Activated CD4-positive, alpha-beta T cell treated with anti-CD3 and anti-CD28 coated beads, Interleukin-2, amount 10 ng/mL, durations not matched to agents 24 days and 14 days (primary cell): ENCODE measurements at regions of chr12 and their contacts with region 1.

Region 1: GRCh38 chr12:56468216-56469006 is at the start of gene SPRYD4:
- DNase-seq: peak; percentile 99
- H3K4me3 Mint-ChIP-seq: peak within 1 kb of the TSS; percentile 92
- H3K27ac Mint-ChIP-seq: peak within 1 kb of the TSS; percentile 98
- H3K4me1 Mint-ChIP-seq: peaks cover 24% of the 10 kb centered on the region
- H3K27me3 Mint-ChIP-seq: no peaks in the 10 kb centered on the region
- total RNA-seq, gene SPRYD4: 5.2 and 5.5 TPM in 2 replicates

Region 2: DNA sequence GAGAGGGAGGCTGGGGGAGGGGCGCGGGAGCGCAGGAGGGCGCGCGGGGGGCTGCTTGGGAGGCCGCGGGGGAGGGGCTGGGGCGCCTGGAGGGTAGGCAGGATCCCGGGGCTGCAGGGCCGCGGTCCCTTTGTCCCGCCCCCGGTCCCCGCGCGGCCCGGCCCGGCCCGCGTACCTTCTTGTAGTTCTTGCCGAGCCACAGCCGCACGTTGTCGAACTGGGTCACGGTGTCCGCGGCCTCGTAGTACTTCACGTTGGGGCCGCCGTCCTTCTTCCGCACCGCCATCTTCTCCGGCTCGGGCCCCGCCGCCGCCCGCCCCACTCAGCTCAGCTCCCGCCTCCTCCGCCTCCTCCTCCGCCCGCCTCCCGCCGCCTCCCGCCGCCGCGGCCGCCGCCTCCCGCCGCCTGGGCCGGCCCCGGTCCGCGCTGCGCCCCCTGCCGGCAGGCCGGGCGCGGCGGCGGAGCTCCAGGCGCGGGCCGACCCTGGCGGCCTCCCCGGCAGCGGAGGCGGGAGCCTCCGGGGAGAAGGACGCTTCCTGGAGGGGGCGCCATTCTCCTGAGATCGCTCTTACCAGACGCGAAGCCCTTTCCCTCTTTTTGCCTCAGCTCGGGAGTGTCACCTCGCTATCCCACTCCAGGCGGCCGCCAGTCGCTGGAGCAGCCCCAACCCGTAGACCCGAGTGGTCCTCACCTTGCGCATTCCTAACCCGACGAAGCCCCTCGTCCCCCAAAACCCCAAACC is 279.1 kb before region 1 on chr12 and contains the start of gene SMARCC2:
- intact Hi-C with region 1: loop called (anchors 1 kb)
- DNase-seq: peak; percentile 96
- H3K4me3 Mint-ChIP-seq: peak within 1 kb of the TSS; percentile 97
- H3K27ac Mint-ChIP-seq: peak within 1 kb of the TSS; percentile 95
- H3K4me1 Mint-ChIP-seq: peaks cover 42% of the 10 kb centered on the region
- H3K27me3 Mint-ChIP-seq: no peaks in the 10 kb centered on the region
- total RNA-seq, gene SMARCC2: 127 and 130 TPM in 2 replicates

Region 3: DNA sequence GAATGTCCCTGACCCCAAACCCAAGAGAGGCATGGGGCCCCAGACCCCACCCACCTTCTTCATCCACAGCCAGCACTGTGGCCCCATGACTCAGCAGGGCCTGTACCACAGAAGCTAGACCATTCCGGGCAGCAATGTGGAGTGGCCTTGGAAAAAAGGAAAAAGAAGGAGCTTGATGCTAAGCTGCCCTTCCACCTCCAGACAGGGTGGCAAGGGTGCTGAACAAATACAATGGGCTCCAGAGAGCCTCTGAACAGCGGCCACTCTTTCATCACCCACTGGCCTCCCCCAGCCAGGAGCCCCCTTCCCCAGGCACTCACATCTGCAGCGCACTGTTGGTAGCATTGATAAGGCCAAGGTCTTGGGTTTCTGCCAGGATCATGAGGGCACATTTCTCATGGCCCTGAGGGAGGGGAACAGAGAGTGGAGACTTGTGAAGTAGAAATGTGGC is 224.7 kb before region 1 on chr12:
- intact Hi-C with region 1: no loop called
- DNase-seq: no peak
- H3K4me3 Mint-ChIP-seq: no peak overlapping the region
- H3K27ac Mint-ChIP-seq: no peak overlapping the region
- H3K4me1 Mint-ChIP-seq: peaks cover 5% of the 10 kb centered on the region
- H3K27me3 Mint-ChIP-seq: no peaks in the 10 kb centered on the region

Region 4: GRCh38 chr12:56315622-56316473 is 152.6 kb before region 1 on chr12 and contains the start of gene CNPY2:
- intact Hi-C with region 1: loop called (anchors 1 kb)
- DNase-seq: peak; percentile 97
- H3K4me3 Mint-ChIP-seq: peak within 1 kb of the TSS; percentile 97
- H3K27ac Mint-ChIP-seq: peak within 1 kb of the TSS; percentile 98
- H3K4me1 Mint-ChIP-seq: peaks cover 7% of the 10 kb centered on the region
- H3K27me3 Mint-ChIP-seq: no peaks in the 10 kb centered on the region
- total RNA-seq, gene CNPY2: 165 and 169 TPM in 2 replicates

Region 5: GRCh38 chr12:56359851-56360767 is 108.3 kb before region 1 on chr12 and contains the start of gene STAT2:
- intact Hi-C with region 1: loop called (anchors 1 kb)
- DNase-seq: peak; percentile 100
- H3K4me3 Mint-ChIP-seq: peak within 1 kb of the TSS; percentile 94
- H3K27ac Mint-ChIP-seq: peak within 1 kb of the TSS; percentile 95
- H3K4me1 Mint-ChIP-seq: peaks cover 31% of the 10 kb centered on the region
- H3K27me3 Mint-ChIP-seq: no peaks in the 10 kb centered on the region
- total RNA-seq, gene STAT2: 64.9 and 68.4 TPM in 2 replicates

Region 6: GRCh38 chr12:56488041-56488955 is 19.9 kb after region 1 on chr12 and contains the start of gene GLS2:
- intact Hi-C with region 1: loop called (anchors 2 kb)
- DNase-seq: peak; percentile 90
- H3K4me3 Mint-ChIP-seq: peak within 1 kb of the TSS; percentile 87
- H3K27ac Mint-ChIP-seq: no peak within 1 kb of the TSS
- H3K4me1 Mint-ChIP-seq: peaks cover 12% of the 10 kb centered on the region
- H3K27me3 Mint-ChIP-seq: peaks cover 38% of the 10 kb centered on the region
- total RNA-seq, gene GLS2: 1.9 and 2.4 TPM in 2 replicates

Region 7: DNA sequence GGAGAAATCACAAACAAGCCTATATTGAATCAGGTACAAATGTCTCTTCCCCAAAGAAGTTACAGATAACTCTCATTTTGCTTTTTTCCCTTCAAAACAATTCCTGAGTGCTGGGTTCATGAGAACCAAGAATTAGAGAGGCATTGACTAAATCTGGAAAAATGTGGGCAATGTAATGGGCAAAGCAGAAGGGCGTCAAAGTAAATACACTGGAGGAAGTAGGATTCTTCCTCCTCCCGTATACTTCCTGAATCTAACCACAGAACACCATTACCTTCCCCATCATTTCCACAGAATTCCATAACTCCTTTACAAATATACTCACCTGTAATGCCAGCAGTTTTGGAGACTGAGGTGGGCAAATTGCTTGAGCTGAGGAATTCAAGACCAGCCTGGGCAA is 50.2 kb after region 1 on chr12:
- intact Hi-C with region 1: no loop called
- DNase-seq: no peak
- H3K4me3 Mint-ChIP-seq: no peak overlapping the region
- H3K27ac Mint-ChIP-seq: no peak overlapping the region
- H3K4me1 Mint-ChIP-seq: peaks cover 33% of the 10 kb centered on the region
- H3K27me3 Mint-ChIP-seq: peaks cover under 1% of the 10 kb centered on the region